CD4-positive, alpha-beta T cell (primary cell): ENCODE measurements at regions of chr18 and their contacts with region 1.

Region 1: GRCh38 chr18:21099442-21099841 is 12.2 kb downstream of the ROCK1 start:
- DNase-seq: no peak
- ATAC-seq: no peak
- H3K4me3 ChIP-seq: no peak overlapping the region
- H3K4me3 Mint-ChIP-seq: peak overlapping the region; percentile 42
- H3K27ac ChIP-seq: no peak overlapping the region
- H3K27ac Mint-ChIP-seq: no peak overlapping the region
- H3K4me1 ChIP-seq: peaks cover 28% of the 10 kb centered on the region
- H3K4me1 Mint-ChIP-seq: peaks cover 82% of the 10 kb centered on the region
- H3K27me3 ChIP-seq: no peaks in the 10 kb centered on the region
- H3K27me3 Mint-ChIP-seq: no peaks in the 10 kb centered on the region
- CTCF ChIP-seq: no peak

Region 2: GRCh38 chr18:21053127-21053526 is 46.3 kb before region 1 on chr18:
- CTCF ChIA-PET with region 1: no interaction called
- POLR2A ChIA-PET with region 1: no interaction called
- intact Hi-C with region 1: loop called in 1 of 2 experiments (anchors 5 kb)
- DNase-seq: no peak
- ATAC-seq: no peak
- H3K4me3 ChIP-seq: no peak overlapping the region
- H3K4me3 Mint-ChIP-seq: no peak overlapping the region
- H3K27ac ChIP-seq: no peak overlapping the region
- H3K27ac Mint-ChIP-seq: peak overlapping the region; percentile 9
- H3K4me1 ChIP-seq: peaks cover 7% of the 10 kb centered on the region
- H3K4me1 Mint-ChIP-seq: peaks cover 49% of the 10 kb centered on the region
- H3K27me3 ChIP-seq: no peaks in the 10 kb centered on the region
- H3K27me3 Mint-ChIP-seq: no peaks in the 10 kb centered on the region
- CTCF ChIP-seq: no peak